ENCODE measurements at regions of chr11 and their contacts with region 1.

Region 1: DNA sequence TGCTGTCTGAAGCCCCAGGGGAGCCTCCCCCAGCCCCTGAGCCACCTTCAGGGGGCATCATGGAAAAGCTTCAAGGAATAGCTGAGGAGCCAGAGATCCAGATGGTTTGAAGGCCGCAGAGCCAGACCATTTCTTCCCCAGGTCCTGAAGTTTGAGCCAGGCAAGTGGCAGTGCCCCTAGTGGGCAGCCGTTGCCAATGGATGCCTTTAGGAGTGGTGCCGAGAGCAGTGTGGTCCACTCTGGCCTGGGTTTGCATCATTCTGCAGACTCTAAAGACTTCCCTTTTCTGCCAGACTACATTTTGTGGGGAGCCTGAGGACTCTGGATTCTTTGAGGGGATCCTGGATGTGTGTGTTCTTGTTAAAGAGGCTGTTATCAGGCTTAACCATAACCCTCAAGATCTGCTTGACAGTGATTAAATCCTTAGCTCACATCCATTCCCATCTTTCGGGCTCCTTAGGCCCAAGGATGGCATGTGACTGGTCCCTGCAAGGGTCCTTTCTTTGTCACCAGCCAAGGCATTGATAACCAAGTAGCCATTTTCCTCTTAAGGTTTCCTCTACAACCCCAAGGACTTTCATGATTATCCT is 13.1 kb downstream of the HINFP start:
- DNase-seq: peak; percentile 48
- H3K4me3 ChIP-seq: no peak overlapping the region
- H3K27ac ChIP-seq: no peak overlapping the region
- H3K4me1 ChIP-seq: no peaks in the 10 kb centered on the region
- H3K27me3 ChIP-seq: no peaks in the 10 kb centered on the region
- CTCF ChIP-seq: peak; percentile 65
- EP300 ChIP-seq: no peak
- RAD21 ChIP-seq: no peak

Region 2: DNA sequence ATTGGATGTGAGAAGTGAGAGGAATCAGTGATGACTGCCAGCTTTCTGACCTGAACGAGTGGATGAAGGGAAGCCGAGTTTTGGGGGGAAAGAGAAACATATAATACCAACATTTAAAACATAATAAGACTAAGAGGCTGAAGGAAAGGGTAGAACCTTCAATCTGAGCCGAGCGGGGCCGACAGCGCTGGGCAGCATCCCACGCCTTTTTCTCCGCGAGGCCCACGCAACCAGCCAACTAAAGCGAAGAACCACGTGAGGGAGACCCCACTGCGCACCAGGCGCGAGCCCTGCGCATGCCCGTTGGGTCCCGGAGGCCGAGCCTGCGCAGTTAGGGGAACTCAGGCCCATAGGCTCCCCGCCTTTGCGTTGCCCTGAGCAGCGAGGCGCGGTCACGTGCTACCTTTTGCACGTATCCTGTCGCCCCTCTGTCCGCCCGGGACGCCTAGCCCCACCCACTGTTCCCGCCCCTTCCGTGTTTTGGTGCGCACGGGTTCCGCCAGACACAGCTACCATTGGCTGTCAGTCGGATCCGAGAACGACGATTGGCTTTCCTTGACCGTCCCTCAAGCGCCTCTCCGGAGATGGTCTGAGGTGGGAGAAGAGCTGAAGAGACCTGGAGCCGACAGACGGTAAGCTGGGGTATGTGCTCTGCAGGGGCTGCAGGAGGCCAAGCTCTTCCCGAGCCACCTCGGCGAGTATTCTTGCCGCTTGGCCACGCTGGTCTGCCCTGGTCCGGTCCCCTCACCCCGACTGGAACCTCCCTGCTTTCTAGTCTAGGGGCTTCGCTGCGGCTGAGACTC is 13.3 kb before region 1 on chr11 and contains the start of gene HINFP:
- CTCF ChIA-PET with region 1: interaction called, 11 read pairs
- POLR2A ChIA-PET with region 1: no interaction called
- DNase-seq: peak; percentile 98
- H3K4me3 ChIP-seq: peak within 1 kb of the TSS; percentile 88 to 90
- H3K27ac ChIP-seq: peak within 1 kb of the TSS; percentile 55 to 92; a peak in 3 of 4 replicates
- H3K4me1 ChIP-seq: peaks cover 13 to 17% of the 10 kb centered on the region in 2 experiments; a peak in 3 of 4 replicates
- H3K27me3 ChIP-seq: no peaks in the 10 kb centered on the region
- CTCF ChIP-seq: no peak
- EP300 ChIP-seq: no peak
- RAD21 ChIP-seq: no peak
- polyA plus RNA-seq, gene HINFP: 21.8 and 36.1 TPM in 2 replicates

Region 3: GRCh38 chr11:119352857-119353260 is 218.4 kb after region 1 on chr11:
- CTCF ChIA-PET with region 1: no interaction called
- POLR2A ChIA-PET with region 1: no interaction called
- DNase-seq: peak; percentile 77
- H3K4me3 ChIP-seq: no peak overlapping the region
- H3K27ac ChIP-seq: peak overlapping the region in 1 of 2 experiments; percentile 35; a peak in 1 of 4 replicates
- H3K4me1 ChIP-seq: peaks cover 0 to 18% of the 10 kb centered on the region in 2 experiments; a peak in 1 of 4 replicates
- H3K27me3 ChIP-seq: no peaks in the 10 kb centered on the region; the same call in 1 of the 2 replicates
- CTCF ChIP-seq: no peak
- EP300 ChIP-seq: no peak
- RAD21 ChIP-seq: no peak